Dorsolateral prefrontal cortex (tissue), 120 donors: ENCODE measurements at regions of chr14 and their contacts with region 1.

Region 1: GRCh38 chr14:69818757-69819191 is 21.7 kb upstream of the SLC10A1 start:
- DNase-seq: peak in 2 of 10 donors; percentile 33 to 52
- H3K4me3 ChIP-seq: peak overlapping the region in 2 of 59 donors; percentile 17 to 21
- H3K27ac ChIP-seq: no peak overlapping the region
- H3K27me3 ChIP-seq: peaks cover 0 to 12% (median 0%) of the 10 kb centered on the region in 45 donors
- CTCF ChIP-seq: peak; percentile 80 to 98 (median 90)

Region 2: DNA sequence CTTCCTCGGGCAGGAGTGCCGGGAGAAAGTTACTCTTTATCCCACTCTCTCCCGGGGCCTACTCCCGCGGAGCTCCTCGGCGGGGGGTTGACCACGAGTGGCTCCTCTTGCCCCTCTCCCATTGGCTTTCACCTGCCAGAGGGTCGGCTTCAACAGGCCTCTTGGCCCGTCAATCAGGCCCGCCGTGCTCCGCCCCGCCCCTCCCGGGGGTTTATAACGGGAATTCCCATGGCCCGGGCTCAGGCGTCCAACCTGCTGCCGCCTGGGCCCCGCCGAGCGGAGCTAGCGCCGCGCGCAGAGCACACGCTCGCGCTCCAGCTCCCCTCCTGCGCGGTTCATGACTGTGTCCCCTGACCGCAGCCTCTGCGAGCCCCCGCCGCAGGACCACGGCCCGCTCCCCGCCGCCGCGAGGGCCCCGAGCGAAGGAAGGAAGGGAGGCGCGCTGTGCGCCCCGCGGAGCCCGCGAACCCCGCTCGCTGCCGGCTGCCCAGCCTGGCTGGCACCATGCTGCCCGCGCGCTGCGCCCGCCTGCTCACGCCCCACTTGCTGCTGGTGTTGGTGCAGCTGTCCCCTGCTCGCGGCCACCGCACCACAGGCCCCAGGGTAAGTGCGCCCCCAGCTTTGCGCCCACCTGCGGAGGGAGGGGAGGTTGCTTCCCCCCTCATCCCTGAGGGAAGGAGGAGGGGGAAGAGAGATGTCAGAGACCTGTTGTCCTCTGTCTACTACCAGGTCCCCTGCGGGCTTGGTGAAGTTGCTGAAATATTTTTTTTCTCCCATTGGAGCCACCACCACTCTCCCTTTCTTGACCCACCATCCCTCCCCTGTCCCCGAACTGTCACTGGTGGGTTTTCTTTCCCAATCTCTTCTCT is 60.6 kb after region 1 on chr14 and contains the start of gene SMOC1:
- intact Hi-C with region 1: loop called in 1 of 2 experiments (anchors 2 kb)
- DNase-seq: peak; percentile 50 to 82 (median 68)
- H3K4me3 ChIP-seq: peak within 1 kb of the TSS; percentile 38 to 79 (median 62)
- H3K27ac ChIP-seq: peak within 1 kb of the TSS in 12 of 59 donors; percentile 11 to 64 (median 40)
- H3K27me3 ChIP-seq: peaks cover 0 to 30% (median 14%) of the 10 kb centered on the region in 45 donors
- CTCF ChIP-seq: peak in 8 of 56 donors; percentile 7 to 37 (median 14)
- total RNA-seq, gene SMOC1: 7.9 to 85.1 (median 34.1) TPM

Region 3: DNA sequence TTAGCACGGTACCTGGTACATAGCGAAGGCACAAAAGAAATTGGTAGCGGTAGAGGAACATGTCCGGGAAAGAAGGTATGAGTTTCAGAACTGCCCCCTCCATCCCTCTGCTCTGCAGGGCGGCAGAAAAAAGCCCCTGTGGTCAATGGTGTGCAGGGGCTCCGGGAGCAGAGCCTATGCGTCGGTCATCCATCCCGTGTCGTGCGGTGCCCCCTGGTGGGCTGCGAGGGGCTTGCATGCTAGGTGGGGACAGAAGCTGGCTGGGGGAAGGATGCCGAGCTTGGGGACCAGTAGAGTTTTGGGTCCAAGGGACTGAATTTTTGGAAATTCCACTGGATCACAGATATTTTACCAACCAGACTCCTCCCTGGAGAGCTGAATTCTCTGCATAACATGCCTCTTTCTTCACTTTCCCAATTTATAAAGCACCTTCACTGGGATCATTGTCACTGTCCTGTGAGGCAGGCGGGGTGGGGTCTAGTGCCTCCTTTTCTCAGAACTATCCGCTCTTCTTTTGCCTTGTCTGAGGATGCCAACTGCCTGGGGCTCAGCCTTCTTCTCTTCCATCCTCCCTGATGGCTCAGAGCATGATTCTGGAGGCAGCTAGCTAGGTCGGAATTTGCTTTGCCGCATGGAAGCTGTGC is 209.1 kb after region 1 on chr14:
- intact Hi-C with region 1: loop called (anchors 1 to 2 kb)
- DNase-seq: peak; percentile 70 to 87 (median 78)
- H3K4me3 ChIP-seq: no peak overlapping the region
- H3K27ac ChIP-seq: no peak overlapping the region
- H3K27me3 ChIP-seq: peaks cover 0 to 10% (median 0%) of the 10 kb centered on the region in 45 donors
- CTCF ChIP-seq: peak; percentile 60 to 99 (median 96)

Region 4: DNA sequence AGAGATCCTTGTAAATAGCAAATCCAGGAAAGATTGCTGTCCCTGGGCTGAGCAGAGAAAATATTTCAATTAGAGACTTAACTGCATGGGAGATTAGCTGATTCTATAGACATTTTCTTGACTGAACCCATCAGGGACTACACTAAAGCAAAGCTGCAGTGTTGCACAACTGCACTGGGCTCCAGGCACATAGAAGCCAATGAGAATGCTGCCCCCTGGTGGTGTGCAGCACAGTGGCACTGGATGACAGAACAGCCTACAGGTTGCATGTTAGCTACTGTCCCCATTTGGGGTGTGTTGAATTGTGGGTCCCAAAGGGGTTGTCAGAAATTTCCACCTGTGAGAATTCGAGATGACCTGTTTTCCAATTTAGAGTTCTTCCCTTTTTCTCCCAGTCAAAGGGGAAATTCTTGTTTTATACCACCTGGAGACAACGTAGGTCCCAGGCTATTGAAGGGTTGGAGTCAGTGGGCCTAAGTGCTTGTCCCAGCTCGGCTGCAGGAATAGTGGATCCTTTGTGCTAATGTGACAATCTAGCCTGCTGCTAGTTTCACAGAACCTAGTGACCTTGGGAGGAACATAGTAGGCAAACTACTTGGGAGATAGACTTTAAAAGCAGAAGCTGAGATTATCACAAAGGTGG is 255.3 kb after region 1 on chr14:
- intact Hi-C with region 1: loop called in 1 of 2 experiments (anchors 5 kb)
- DNase-seq: peak in 9 of 10 donors; percentile 46 to 83 (median 75)
- H3K4me3 ChIP-seq: no peak overlapping the region
- H3K27ac ChIP-seq: no peak overlapping the region
- H3K27me3 ChIP-seq: peaks cover 0 to 4% (median 0%) of the 10 kb centered on the region in 45 donors
- CTCF ChIP-seq: peak; percentile 63 to 95 (median 83)

Region 5: DNA sequence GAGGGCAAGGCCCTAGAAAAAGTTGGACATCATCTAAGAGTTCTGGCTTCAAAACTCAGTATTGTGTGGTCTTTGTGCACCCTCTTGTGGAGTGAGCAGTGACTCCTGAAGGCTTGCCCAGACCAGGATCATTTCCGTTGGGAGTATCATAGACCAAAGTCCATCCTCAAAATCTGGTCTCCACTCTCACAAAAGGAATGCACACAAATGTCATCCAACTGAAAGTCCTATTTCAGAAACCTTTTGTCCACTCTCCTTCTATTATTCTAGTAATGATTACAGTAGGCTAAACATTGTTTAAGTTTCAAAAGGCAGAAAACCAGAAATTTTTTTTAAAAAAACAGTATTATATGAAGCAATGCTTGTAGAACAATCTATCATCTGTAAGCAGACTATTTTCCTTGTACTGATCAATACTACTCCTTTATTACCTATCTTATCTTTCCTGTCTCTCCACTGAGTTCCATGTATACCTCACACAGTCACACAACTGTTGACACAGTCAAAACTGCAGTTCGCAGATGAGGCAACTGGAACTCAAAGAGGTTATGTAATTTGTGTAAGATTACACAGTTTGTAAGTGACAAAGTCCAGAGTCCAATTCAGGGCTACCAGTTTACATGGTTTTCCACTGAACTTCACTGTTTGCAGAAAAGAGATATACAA is 499.3 kb after region 1 on chr14:
- intact Hi-C with region 1: loop called (anchors 5 kb)
- DNase-seq: peak in 5 of 10 donors; percentile 17 to 51 (median 39)
- H3K4me3 ChIP-seq: no peak overlapping the region
- H3K27ac ChIP-seq: no peak overlapping the region
- H3K27me3 ChIP-seq: peaks cover 0 to 7% (median 0%) of the 10 kb centered on the region in 45 donors
- CTCF ChIP-seq: peak in 55 of 56 donors; percentile 37 to 86 (median 67)

Region 6: DNA sequence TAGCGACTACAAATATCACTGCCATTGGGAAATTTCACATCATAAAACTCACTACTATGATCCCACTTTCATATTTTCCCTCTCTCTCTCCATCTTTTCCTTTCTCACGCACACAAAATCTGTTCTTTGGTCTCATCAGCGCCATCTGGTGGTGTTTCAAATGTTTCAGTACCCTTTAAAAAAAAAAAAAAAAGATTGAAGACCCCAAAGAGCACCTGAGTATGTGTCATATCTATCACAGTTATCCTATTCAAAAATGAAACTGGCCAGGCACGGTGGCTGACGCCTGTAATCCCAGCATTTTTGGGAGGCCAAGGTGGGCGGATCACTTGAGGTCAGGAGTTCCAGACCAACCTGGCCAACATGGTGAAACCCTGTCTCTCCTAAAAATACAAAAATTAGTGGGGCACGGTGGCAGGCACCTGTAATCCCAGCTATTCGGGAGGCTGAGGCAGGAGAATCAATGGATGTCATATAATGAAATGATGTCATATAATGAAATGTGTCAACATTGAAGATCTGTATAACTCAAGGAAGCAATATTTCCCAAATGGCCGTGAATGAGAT is 895.4 kb after region 1 on chr14:
- intact Hi-C with region 1: loop called in 1 of 2 experiments (anchors 10 kb)
- DNase-seq: peak in 3 of 10 donors; percentile 10 to 33 (median 14)
- H3K4me3 ChIP-seq: no peak overlapping the region
- H3K27ac ChIP-seq: no peak overlapping the region
- H3K27me3 ChIP-seq: peaks cover 0 to 9% (median 0%) of the 10 kb centered on the region in 45 donors
- CTCF ChIP-seq: peak; percentile 55 to 80 (median 68)